PC-3 (cell line): ENCODE measurements at regions of chr10 and their contacts with region 1.

Region 1: DNA sequence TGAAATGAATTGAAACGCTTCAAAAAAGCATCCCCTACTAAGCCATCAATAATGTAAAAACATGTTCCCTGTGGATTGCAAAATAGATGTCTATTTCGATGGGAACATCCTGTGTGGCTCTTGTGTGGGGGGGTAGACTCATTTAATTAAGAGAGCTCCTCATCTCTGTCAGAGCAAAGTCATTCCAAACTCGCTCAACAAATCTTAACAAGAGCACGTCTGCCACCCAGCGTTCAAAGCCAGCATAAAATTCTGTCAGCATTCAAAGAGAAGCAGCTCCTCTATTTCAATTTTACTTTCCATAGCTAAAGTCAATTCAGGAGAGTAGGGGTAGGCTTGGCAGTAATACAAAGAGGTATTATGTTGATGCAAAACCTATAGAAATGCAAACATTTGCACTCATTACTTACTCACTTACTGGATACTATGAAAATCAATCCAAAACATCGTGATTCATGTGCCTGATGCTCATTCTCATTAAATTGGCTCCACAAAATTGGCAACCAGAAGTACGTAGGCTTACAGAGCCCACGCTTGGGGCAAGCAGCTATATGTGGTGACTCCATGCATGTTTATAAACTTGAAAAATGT is 114.9 kb downstream of the IPMK start:
- DNase-seq: peak; percentile 91
- ATAC-seq: peak; percentile 35
- H3K4me3 ChIP-seq: no peak overlapping the region
- H3K27ac ChIP-seq: no peak overlapping the region
- H3K4me1 ChIP-seq: peaks cover 17% of the 10 kb centered on the region
- H3K27me3 ChIP-seq: 0 out of 2 replicates have a peak, but pooled peaks cover 5% of the 10 kb centered on the region
- CTCF ChIP-seq: peak; percentile 96

Region 2: DNA sequence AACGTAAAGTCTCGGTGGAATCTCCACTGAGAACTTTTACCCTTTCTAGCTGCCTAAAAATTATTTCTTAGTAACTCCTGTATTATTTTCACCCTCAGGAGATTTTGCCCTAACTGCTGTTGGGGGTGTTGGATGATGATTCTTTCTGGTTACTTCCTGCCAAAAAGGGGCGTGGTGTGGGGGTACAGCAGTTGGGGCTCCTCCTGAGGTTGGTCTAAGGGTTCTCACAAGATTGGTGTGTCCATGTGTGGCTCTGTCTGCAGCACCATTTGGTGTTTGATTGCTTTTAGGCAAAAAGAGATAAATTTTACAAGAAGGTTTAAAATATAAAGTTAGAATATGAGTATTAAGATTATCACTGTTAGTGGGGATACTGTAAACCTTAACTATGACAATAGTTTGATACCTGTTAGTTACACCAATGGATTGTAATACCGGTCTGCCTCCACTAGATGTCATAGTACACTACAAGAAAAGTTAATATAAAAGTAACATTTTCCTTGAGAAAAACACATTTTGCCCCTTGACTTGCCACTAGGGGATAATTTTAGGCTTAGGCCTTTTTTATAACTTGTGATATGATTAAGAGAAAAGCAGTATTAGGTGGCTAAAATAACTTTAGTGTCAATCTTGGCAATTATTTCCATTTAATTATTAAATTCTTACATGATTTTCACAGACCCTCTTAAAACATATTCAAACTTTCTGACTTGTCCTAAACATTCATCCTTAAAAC is 813.8 kb before region 1 on chr10:
- CTCF ChIA-PET with region 1: interaction called, 5 read pairs
- POLR2A ChIA-PET with region 1: no interaction called
- intact Hi-C with region 1: loop called (anchors 5 kb)
- DNase-seq: peak; percentile 86
- ATAC-seq: peak; percentile 77
- H3K4me3 ChIP-seq: no peak overlapping the region
- H3K27ac ChIP-seq: no peak overlapping the region
- H3K4me1 ChIP-seq: no peaks in the 10 kb centered on the region
- H3K27me3 ChIP-seq: no peaks in the 10 kb centered on the region
- CTCF ChIP-seq: peak; percentile 91

Region 3: DNA sequence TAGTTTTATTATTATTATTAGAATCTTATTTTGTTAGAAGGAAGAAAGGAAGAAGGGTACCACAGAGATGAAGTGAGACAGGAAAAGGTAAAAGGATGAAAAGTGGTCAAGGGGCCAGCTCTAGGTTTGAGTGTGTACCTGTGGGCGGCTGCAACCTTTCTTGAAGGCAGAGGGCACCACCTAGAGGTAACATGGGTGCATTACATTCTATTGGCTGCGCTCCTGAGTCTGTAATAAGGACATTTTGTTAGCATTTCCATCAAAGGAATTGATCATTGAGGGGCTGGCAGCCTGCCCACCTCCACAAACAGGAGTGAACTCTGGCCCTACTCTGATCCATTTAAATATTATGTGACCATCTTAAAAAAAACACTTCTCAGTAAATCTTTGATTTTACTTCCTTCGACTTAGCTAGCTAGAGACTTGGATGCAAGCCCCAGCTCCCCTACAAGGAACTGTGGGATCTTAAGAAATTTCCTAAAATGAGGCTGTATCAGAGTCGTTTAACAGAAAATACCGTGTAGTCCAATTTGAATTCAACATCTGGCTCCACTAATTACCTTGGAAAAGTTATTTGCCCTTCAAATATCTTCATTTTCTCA is 495.5 kb before region 1 on chr10:
- CTCF ChIA-PET with region 1: interaction called, 3 read pairs
- POLR2A ChIA-PET with region 1: no interaction called
- intact Hi-C with region 1: loop called (anchors 2 kb)
- DNase-seq: peak; percentile 89
- ATAC-seq: peak; percentile 95
- H3K4me3 ChIP-seq: no peak overlapping the region
- H3K27ac ChIP-seq: no peak overlapping the region
- H3K4me1 ChIP-seq: no peaks in the 10 kb centered on the region
- H3K27me3 ChIP-seq: no peaks in the 10 kb centered on the region
- CTCF ChIP-seq: peak; percentile 93

Region 4: DNA sequence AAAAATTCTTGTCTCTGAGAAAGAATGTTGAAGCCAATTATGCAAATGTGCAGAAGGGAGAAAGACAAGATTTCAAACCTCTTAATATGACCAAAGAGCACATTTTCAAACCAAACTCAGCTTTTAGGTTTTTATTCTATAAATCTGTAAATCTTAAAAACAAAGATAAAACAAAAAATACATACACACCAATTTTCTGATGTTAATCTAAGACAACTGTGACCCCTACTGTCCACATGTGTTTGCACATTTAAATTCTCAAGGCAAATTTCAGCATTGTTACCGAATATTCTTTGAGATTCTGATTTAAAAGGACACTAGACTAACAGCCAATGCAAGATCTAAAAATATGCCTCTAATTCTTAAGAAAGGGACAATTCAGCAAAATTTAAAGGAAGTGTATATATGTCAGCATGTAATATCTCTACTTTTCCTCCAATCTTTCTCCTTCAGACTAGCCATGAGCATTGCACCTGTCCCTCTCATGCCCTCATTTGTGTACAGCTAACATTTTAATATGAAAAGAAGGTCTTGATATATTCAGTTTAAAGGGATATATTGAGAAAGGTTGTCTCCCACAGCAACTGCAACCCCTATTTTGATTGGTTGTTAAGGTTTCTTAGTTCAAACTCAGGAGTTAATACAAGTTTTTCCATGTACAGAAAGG is 302.9 kb before region 1 on chr10:
- CTCF ChIA-PET with region 1: interaction called, 13 read pairs
- POLR2A ChIA-PET with region 1: no interaction called
- intact Hi-C with region 1: loop called (anchors 2 kb)
- DNase-seq: peak; percentile 67
- ATAC-seq: peak; percentile 67
- H3K4me3 ChIP-seq: no peak overlapping the region
- H3K27ac ChIP-seq: no peak overlapping the region
- H3K4me1 ChIP-seq: no peaks in the 10 kb centered on the region
- H3K27me3 ChIP-seq: no peaks in the 10 kb centered on the region
- CTCF ChIP-seq: peak; percentile 89

Region 5: DNA sequence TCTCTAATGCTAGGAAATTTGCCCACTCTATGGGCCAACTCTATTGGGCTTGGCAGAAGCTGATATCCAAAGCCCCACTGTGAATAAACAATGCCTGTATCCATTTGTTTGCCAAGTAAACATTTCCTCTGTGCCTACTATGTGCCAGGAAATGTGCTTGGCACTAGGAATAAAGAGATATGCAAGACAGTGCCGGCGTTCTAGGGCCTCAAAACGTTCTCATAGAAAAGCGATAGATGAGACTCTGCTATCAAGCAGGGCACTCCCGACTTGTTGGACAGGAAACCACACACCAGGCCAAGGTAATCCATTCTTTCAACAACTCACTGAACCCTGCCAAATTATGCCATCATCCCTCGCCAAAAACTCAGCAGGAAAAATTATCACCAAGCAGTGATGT is 81.8 kb before region 1 on chr10:
- CTCF ChIA-PET with region 1: interaction called, 12 read pairs
- POLR2A ChIA-PET with region 1: interaction called, 3 read pairs
- intact Hi-C with region 1: loop called (anchors 1 kb)
- DNase-seq: no peak
- ATAC-seq: no peak
- H3K4me3 ChIP-seq: no peak overlapping the region
- H3K27ac ChIP-seq: no peak overlapping the region
- H3K4me1 ChIP-seq: peaks cover 6% of the 10 kb centered on the region
- H3K27me3 ChIP-seq: no peaks in the 10 kb centered on the region
- CTCF ChIP-seq: no peak